B cell (primary cell): ENCODE measurements at regions of chr1 and their contacts with region 1.

Region 1: DNA sequence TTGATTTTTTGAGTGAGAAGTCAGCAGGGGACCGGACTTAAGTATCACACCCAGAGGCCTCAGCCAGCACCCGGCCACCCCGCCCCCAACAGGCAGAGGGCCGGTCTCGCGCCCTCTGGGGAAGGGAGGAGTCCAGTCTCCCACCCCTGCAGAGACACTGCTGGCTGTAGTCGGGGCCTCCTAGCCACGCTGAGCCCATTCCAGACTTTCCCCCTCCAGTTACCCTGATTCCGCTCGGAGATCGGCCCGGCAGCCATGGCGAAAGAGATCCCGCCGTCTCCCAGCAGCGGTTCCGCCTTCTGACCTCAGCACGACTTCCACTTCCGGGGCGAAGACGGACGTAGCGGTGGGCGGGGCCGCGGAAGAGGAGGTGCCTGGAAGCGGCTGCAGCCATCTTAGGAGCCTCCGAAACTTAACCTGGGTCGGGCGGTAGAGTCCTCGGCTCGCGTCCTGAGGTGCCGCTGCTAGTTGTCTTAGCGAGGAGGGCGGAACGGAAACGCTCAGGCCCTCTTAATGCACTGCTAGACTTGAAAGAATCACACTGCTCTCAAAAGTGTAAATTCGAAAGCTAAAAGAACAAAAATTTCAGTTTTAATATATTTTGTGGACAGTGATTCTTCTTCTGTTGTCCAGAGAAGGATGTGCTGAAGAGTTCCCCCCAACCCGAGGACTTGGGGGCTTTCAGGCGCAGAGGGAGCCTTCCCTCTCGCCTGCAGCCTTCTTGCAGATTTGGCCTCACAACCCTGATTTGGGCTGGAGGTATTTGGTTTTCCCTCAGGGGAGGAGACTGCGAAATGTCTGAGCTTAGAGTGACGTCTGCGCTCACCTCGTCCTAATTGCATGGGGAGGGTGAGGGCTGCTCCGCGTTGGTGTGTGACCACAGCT is at the start of gene SF3B4:
- DNase-seq: peak; percentile 96
- ATAC-seq: peak; percentile 95
- H3K4me3 ChIP-seq: peak within 1 kb of the TSS; percentile 76 to 98 (median 89)
- H3K4me3 Mint-ChIP-seq: peak within 1 kb of the TSS; percentile 98
- H3K27ac ChIP-seq: peak within 1 kb of the TSS; percentile 74 to 90
- H3K27ac Mint-ChIP-seq: peak within 1 kb of the TSS; percentile 97
- H3K4me1 ChIP-seq: peaks cover 17 to 24% of the 10 kb centered on the region in 2 donors
- H3K4me1 Mint-ChIP-seq: peaks cover 38% of the 10 kb centered on the region
- H3K27me3 ChIP-seq: peaks cover 0 to 2% (median 0%) of the 10 kb centered on the region in 4 experiments
- H3K27me3 Mint-ChIP-seq: peaks cover 20% of the 10 kb centered on the region
- CTCF ChIP-seq: no peak
- total RNA-seq, gene SF3B4: 59.7 and 60.1 TPM in 2 replicates

Region 2: DNA sequence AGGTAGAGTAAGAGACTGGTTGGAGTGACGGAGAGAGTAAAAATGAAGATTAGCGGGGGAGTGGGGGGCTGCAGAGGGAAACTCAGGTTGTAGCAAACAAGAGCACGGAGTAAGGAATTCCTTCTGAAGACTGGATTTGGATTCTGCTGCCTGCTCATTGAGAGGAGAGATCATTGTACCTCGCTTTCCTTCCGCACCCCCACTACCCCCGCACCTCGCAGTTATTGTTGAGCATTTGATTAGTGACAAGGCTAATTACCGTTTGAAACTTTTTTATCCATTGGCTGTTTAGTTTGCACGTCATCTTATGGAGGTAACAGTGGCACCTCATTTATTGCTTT is 394.1 kb after region 1 on chr1:
- CTCF ChIA-PET with region 1: interaction called, 3 read pairs
- POLR2A ChIA-PET with region 1: no interaction called
- intact Hi-C with region 1: loop called (anchors 10 kb)
- DNase-seq: no peak
- ATAC-seq: no peak
- H3K4me3 ChIP-seq: peak overlapping the region; percentile 85 to 99 (median 92)
- H3K4me3 Mint-ChIP-seq: peak overlapping the region; percentile 98
- H3K27ac ChIP-seq: peak overlapping the region; percentile 86 to 97
- H3K27ac Mint-ChIP-seq: peak overlapping the region; percentile 98
- H3K4me1 ChIP-seq: peaks cover 13% of the 10 kb centered on the region in 2 donors
- H3K4me1 Mint-ChIP-seq: peaks cover 24% of the 10 kb centered on the region
- H3K27me3 ChIP-seq: no peaks in the 10 kb centered on the region
- H3K27me3 Mint-ChIP-seq: no peaks in the 10 kb centered on the region
- CTCF ChIP-seq: no peak

Region 3: GRCh38 chr1:150718225-150718891 is 790.6 kb after region 1 on chr1:
- CTCF ChIA-PET with region 1: no interaction called
- POLR2A ChIA-PET with region 1: no interaction called
- intact Hi-C with region 1: no loop called
- DNase-seq: no peak
- ATAC-seq: no peak
- H3K4me3 ChIP-seq: no peak overlapping the region
- H3K4me3 Mint-ChIP-seq: no peak overlapping the region
- H3K27ac ChIP-seq: no peak overlapping the region
- H3K27ac Mint-ChIP-seq: no peak overlapping the region
- H3K4me1 ChIP-seq: no peaks in the 10 kb centered on the region
- H3K4me1 Mint-ChIP-seq: no peaks in the 10 kb centered on the region
- H3K27me3 ChIP-seq: no peaks in the 10 kb centered on the region
- H3K27me3 Mint-ChIP-seq: no peaks in the 10 kb centered on the region
- CTCF ChIP-seq: no peak